HEK293T (cell line): ENCODE measurements at regions of chr5 and their contacts with region 1.

Region 1: GRCh38 chr5:43389679-43390329 is 22.4 kb downstream of the CCL28 start:
- DNase-seq: peak; percentile 72

Region 2: GRCh38 chr5:43409809-43410271 is 20.0 kb after region 1 on chr5:
- CTCF ChIA-PET with region 1: interaction called, 11 read pairs
- POLR2A ChIA-PET with region 1: no interaction called
- DNase-seq: no peak